Endothelial cell of umbilical vein (primary cell): ENCODE measurements at regions of chr1 and their contacts with region 1.

Region 1: GRCh38 chr1:183744132-183744913 is 60.6 kb upstream of the RGL1 start:
- DNase-seq: no peak
- H3K4me3 ChIP-seq: no peak overlapping the region
- H3K27ac ChIP-seq: no peak overlapping the region
- H3K4me1 ChIP-seq: peaks cover 4% of the 10 kb centered on the region
- H3K27me3 ChIP-seq: no peaks in the 10 kb centered on the region
- CTCF ChIP-seq: no peak
- POLR2A ChIP-seq: no peak

Region 2: GRCh38 chr1:183842795-183843144 is 98.4 kb after region 1 on chr1:
- CTCF ChIA-PET with region 1: no interaction called
- POLR2A ChIA-PET with region 1: no interaction called
- dilution Hi-C with region 1: no loop called
- intact Hi-C with region 1: no loop called
- DNase-seq: no peak
- H3K4me3 ChIP-seq: peak overlapping the region in 1 of 3 experiments; percentile 28
- H3K27ac ChIP-seq: peak overlapping the region; percentile 74
- H3K4me1 ChIP-seq: peaks cover 55% of the 10 kb centered on the region
- H3K27me3 ChIP-seq: no peaks in the 10 kb centered on the region
- CTCF ChIP-seq: no peak
- POLR2A ChIP-seq: no peak

Region 3: GRCh38 chr1:183891158-183891856 is 147.0 kb after region 1 on chr1:
- CTCF ChIA-PET with region 1: no interaction called
- POLR2A ChIA-PET with region 1: interaction called, 10 read pairs
- dilution Hi-C with region 1: no loop called
- intact Hi-C with region 1: no loop called
- DNase-seq: no peak
- H3K4me3 ChIP-seq: no peak overlapping the region
- H3K27ac ChIP-seq: no peak overlapping the region
- H3K4me1 ChIP-seq: peaks cover 26% of the 10 kb centered on the region
- H3K27me3 ChIP-seq: no peaks in the 10 kb centered on the region
- CTCF ChIP-seq: no peak
- POLR2A ChIP-seq: no peak